PC-9 (cell line): ENCODE measurements at regions of chr3 and their contacts with region 1.

Region 1: DNA sequence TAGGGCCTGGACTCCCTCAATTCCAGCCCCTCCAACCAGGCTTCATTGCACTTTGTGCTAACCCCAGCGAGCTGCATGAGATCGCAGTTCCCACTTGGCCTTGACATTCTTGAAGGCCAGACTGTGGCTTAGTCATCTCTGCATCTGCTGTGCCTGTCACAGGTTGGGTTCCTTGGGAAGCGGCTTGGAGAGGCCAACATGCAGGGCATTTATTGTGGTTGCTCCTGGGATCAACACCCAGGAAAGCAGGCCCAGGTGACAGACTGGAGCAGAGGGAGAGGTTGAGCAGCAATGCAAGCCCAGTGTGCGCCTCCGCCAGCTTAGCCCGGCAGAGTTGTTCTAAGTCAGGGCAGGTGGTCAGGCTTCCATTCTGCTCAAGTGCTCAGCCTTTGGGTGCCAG is 10.5 kb downstream of the ABCF3 start:
- DNase-seq: no peak
- H3K4me3 ChIP-seq: no peak overlapping the region
- H3K27ac ChIP-seq: no peak overlapping the region
- H3K4me1 ChIP-seq: no peaks in the 10 kb centered on the region
- H3K27me3 ChIP-seq: no peaks in the 10 kb centered on the region
- CTCF ChIP-seq: no peak

Region 2: DNA sequence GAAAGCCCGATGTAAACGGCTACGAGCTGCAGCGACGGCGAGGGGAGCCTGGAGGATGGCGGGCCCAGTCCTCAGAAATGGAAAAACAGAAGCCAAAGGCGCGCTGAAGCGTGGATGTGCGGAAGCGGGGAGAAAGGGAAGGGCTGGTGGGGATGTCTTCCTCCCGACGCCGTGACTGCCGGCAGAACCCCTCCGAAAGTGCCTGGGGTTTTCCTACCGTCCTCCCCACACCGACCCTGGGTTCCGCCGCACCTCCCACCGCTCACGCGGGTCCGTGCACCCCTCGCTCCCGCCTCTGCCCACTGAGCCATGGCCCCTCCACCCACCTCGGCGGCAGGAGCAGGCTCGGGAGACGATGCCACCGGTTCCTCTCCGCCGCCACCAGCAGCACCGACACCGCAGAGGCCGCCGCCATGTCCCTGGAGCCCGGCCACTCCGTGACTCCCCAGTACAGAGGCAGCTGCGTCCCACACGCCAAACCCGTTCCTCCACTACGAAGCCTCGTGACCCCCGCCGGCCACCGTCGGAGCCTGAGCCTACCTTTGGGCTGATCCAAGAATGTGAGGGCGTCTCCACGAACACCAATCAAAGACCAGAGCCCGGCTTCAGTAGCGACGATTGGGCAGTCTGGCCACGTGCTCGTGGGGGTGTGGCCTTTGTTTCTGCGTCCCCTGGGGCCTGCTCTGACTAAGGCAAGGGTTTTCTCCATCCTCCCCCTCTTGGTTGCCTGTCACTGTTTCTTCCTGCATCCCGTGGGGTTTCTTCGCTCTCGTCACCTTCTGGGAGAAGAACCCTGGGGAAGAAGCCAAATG is 1097.3 kb before region 1 on chr3 and contains the start of gene MCCC1:
- CTCF ChIA-PET with region 1: interaction called, 13 read pairs
- POLR2A ChIA-PET with region 1: no interaction called
- intact Hi-C with region 1: no loop called
- DNase-seq: peak; percentile 100
- H3K4me3 ChIP-seq: peak within 1 kb of the TSS; percentile 86
- H3K27ac ChIP-seq: peak within 1 kb of the TSS; percentile 52
- H3K4me1 ChIP-seq: peaks cover 26% of the 10 kb centered on the region
- H3K27me3 ChIP-seq: no peaks in the 10 kb centered on the region
- CTCF ChIP-seq: no peak
- total RNA-seq, gene MCCC1: 52.6 and 56.8 TPM in 2 replicates

Region 3: GRCh38 chr3:184170791-184171105 is 25.8 kb before region 1 on chr3:
- CTCF ChIA-PET with region 1: no interaction called
- POLR2A ChIA-PET with region 1: no interaction called
- intact Hi-C with region 1: no loop called
- DNase-seq: no peak
- H3K4me3 ChIP-seq: no peak overlapping the region
- H3K27ac ChIP-seq: no peak overlapping the region
- H3K4me1 ChIP-seq: peaks cover 3% of the 10 kb centered on the region
- H3K27me3 ChIP-seq: no peaks in the 10 kb centered on the region
- CTCF ChIP-seq: no peak

Region 4: DNA sequence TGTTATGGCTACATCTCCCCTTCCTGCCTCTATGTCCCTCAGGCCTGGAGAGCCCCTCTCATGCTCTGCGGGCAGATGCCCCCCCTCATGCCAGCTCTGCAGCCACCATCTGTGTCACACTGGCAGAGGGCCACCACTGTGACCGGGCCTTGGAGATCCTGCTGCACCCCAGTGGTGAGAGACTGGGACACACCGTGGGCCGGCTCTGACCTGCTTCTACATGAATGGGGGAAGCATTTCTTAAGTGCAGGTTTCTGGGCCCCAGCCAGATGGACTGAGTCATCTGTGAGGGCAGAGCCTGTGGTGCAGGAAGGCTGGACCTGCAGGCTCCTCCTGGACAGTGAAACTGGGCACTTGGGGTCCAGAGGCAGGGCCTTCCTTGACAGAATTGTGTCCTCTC is 37.7 kb after region 1 on chr3:
- CTCF ChIA-PET with region 1: no interaction called
- POLR2A ChIA-PET with region 1: interaction called, 18 read pairs
- intact Hi-C with region 1: no loop called
- DNase-seq: peak; percentile 92 to 95
- H3K4me3 ChIP-seq: no peak overlapping the region
- H3K27ac ChIP-seq: no peak overlapping the region
- H3K4me1 ChIP-seq: peaks cover 17% of the 10 kb centered on the region
- H3K27me3 ChIP-seq: peaks cover 36% of the 10 kb centered on the region
- CTCF ChIP-seq: peak; percentile 60